WTC11 (cell line): ENCODE measurements at regions of chr16 and their contacts with region 1.

Region 1: GRCh38 chr16:30032083-30032819 is 1.2 kb upstream of the TLCD3B start:
- DNase-seq: peak; percentile 86
- ATAC-seq: peak; percentile 55
- H3K4me3 Mint-ChIP-seq: peak overlapping the region; percentile 79
- H3K27ac Mint-ChIP-seq: no peak overlapping the region
- H3K4me1 Mint-ChIP-seq: peaks cover 35% of the 10 kb centered on the region
- H3K27me3 Mint-ChIP-seq: peaks cover 50% of the 10 kb centered on the region
- CTCF ChIP-seq: peak; percentile 89

Region 2: GRCh38 chr16:29805378-29806098 is 226.7 kb before region 1 on chr16:
- CTCF ChIA-PET with region 1: interaction called, 26 read pairs
- POLR2A ChIA-PET with region 1: no interaction called
- DNase-seq: peak; percentile 97
- ATAC-seq: peak; percentile 78
- H3K4me3 Mint-ChIP-seq: peak overlapping the region; percentile 99
- H3K27ac Mint-ChIP-seq: peak overlapping the region; percentile 100
- H3K4me1 Mint-ChIP-seq: peaks cover 44% of the 10 kb centered on the region
- H3K27me3 Mint-ChIP-seq: no peaks in the 10 kb centered on the region
- CTCF ChIP-seq: no peak

Region 3: DNA sequence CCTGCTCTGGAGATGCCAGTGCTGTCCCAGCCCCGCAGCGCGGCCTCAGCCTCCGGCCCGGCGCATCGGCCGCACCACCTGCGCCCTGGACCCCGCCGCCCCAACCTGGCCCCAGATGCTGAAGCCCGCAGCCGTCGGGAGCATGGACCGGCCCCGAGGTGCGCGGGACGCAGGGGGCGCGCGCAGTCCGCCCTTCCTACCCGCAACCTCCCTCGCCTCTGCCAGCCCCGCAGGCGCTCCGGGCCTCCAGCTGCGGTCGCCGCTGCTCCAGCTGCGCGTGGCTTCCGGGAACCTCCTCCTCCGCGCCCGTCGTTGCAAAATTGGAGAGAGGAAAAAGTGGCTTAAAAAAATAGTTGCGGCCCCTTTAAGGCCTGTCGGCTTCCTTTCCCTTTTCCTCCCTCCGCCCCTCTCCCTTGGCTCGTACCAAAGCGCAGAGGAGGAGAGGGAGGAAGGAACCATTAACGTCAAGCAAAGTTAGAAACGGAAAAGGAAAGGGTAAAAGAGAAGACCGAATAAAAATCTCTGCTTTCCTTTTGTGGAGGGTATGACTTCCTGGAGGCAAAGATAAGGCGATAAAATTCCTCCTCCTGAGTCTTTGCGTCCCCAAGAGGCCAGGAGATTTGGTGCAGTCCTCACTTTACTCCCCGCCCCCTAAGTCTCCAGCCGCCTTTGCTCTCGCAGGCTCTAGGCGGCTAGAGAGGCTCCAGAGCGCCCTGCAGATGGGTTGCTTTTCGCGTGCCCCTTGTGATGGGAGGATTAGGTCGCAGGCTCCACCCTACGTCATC is 169.2 kb before region 1 on chr16 and contains the start of gene CDIPT:
- CTCF ChIA-PET with region 1: interaction called, 22 read pairs
- POLR2A ChIA-PET with region 1: no interaction called
- DNase-seq: peak; percentile 94
- ATAC-seq: peak; percentile 98
- H3K4me3 Mint-ChIP-seq: peak within 1 kb of the TSS; percentile 98
- H3K27ac Mint-ChIP-seq: peak within 1 kb of the TSS; percentile 100
- H3K4me1 Mint-ChIP-seq: peaks cover 8% of the 10 kb centered on the region
- H3K27me3 Mint-ChIP-seq: no peaks in the 10 kb centered on the region
- CTCF ChIP-seq: no peak
- total RNA-seq, gene CDIPT: 70.7 to 71.7 TPM (median 70.9 TPM) in 3 replicates

Region 4: DNA sequence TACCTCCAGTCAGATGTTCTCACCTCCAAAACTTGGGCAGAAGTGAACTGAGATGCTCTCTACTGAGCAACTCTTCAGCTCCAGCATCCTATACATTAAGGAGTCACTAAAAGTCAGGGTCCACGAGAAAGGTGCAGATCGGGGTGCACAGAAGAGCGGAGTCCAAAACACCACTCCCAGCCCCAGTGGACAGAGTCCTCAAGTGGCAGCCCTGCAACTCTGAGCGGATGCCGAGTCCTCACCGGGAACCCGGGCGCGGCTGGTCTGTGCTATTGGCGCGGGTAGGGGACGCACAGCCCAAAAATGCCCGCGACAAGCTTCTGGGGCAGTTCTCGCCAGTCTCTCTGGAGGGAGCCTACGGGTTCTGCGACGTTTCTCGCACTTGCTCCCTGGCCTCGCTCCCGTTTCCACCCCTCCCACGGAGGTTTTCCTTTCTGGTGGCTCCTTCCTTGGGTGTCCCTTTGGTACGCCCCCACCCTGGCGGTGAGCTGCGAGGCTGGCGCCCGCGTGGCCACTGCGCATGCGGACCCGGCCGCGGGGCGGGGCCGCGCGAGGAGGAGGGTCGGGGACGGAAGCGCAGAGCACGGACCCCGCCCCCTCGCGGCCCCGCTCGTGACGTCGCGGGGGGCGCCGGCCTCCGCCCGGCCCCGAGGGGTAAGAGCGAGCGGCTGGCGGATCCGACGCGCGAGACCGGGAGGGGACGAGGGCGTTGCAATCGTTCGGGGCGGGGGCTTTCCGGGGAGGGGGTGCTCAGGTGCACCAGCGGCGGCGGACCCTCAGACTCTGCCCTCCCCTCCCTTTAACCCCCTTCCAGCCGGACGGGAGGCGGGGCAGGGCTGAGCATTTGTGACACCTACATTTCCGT is 70.5 kb before region 1 on chr16 and contains the start of gene TMEM219:
- CTCF ChIA-PET with region 1: interaction called, 13 read pairs
- POLR2A ChIA-PET with region 1: interaction called, 5 read pairs
- DNase-seq: peak; percentile 86
- ATAC-seq: peak; percentile 92
- H3K4me3 Mint-ChIP-seq: peak within 1 kb of the TSS; percentile 86
- H3K27ac Mint-ChIP-seq: peak within 1 kb of the TSS; percentile 57; the same call in 1 of the 2 replicates
- H3K4me1 Mint-ChIP-seq: peaks cover 13% of the 10 kb centered on the region
- H3K27me3 Mint-ChIP-seq: peaks cover 12% of the 10 kb centered on the region
- CTCF ChIP-seq: no peak
- total RNA-seq, gene TMEM219: 69.6 to 87.6 TPM (median 78.0 TPM) in 3 replicates

Region 5: DNA sequence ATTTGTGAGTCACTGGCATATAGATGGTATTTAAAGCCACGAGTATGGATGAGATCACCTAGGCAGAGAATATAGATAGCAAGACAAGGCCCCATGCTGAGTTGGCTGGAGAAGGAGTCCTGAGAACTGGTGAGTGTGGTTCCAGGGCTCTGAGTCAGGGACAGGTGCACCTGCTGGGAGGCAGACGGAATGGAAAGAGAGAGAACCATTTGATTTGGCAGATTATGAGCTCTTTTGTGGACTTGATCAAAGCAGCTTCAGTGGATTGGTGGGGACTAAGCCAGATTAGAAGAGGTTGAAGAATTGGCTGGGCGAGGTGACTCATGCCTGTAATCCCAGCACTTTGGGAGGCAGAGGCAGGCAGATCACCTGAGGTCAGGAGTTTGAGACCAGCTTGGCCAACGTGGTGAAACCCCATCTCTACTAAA is 13.5 kb before region 1 on chr16:
- CTCF ChIA-PET with region 1: interaction called, 17 read pairs
- POLR2A ChIA-PET with region 1: interaction called, 5 read pairs
- DNase-seq: no peak
- ATAC-seq: no peak
- H3K4me3 Mint-ChIP-seq: no peak overlapping the region
- H3K27ac Mint-ChIP-seq: no peak overlapping the region
- H3K4me1 Mint-ChIP-seq: peaks cover 3% of the 10 kb centered on the region; the same call in 1 of the 2 replicates
- H3K27me3 Mint-ChIP-seq: no peaks in the 10 kb centered on the region
- CTCF ChIP-seq: no peak

Region 6: DNA sequence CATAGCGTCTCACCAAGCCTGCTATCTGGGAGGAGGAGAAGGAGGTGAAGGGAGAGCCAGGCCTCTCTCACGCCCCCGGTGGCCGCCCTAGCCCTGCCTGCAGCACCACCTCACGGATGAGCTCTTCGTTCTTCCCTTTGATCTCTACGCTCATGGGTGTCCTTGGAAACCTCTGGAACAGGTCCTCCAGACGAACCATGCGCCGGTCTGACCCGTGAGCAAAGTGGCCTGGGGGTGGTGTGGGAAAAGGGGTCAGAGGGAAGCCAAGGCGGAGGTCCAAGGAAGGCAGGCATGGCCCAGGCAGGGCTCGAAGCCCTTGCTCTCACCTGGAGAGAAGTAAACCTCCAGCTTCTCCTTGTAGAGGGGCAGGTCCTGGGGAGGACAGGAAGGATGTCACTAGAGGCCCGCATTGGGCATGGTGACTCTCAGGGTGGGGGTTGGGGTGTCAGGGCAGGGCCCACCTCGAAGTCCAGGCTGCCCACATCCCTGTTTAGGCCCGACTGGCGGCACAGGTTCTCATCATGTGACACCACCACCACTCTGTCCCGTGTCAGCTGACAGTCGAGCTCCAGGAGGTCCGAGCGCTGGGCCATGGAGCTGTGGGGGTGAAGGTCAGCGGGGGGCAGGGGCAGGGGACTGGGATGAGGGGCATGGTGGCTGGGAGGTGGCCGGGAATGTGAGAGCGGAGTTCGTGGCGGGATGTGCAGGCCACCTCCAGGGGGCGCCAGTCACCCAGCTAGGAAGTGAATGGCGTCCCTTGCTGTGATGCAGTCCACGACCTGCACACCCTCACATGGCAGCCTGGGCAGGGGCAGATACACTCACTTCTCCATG is 80.2 kb after region 1 on chr16:
- CTCF ChIA-PET with region 1: interaction called, 13 read pairs
- POLR2A ChIA-PET with region 1: no interaction called
- DNase-seq: peak; percentile 82
- ATAC-seq: peak; percentile 83
- H3K4me3 Mint-ChIP-seq: no peak overlapping the region
- H3K27ac Mint-ChIP-seq: no peak overlapping the region
- H3K4me1 Mint-ChIP-seq: peaks cover 3% of the 10 kb centered on the region
- H3K27me3 Mint-ChIP-seq: no peaks in the 10 kb centered on the region
- CTCF ChIP-seq: peak; percentile 90